SK-N-SH (cell line): ENCODE measurements at regions of chr12 and their contacts with region 1.

Region 1: DNA sequence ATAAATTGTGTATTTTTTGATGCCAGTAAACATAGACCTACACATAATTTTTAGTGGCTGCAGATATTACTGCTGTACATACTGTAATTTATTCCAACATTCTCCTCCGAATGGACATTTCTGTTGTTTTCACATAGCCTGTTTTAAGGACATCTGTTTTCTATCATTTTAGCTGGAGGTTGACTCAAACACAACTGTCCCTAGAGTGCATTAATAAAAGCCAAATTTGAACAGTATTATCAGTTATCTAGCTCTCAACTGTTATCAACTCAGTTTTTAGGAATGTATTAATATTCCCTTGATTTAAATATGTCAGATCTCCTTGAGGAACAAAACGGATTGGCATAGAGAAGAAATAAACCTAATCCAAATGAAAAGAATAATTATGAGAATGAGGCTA is 17.2 kb upstream of the PIWIL1 start:
- DNase-seq: no peak
- H3K4me3 ChIP-seq: no peak overlapping the region
- H3K27ac ChIP-seq: no peak overlapping the region
- H3K4me1 ChIP-seq: no peaks in the 10 kb centered on the region; a peak in 2 of 4 replicates
- H3K27me3 ChIP-seq: no peaks in the 10 kb centered on the region
- CTCF ChIP-seq: no peak
- EP300 ChIP-seq: peak in 1 of 2 experiments; percentile 65; a peak in 1 of 4 replicates
- RAD21 ChIP-seq: no peak

Region 2: DNA sequence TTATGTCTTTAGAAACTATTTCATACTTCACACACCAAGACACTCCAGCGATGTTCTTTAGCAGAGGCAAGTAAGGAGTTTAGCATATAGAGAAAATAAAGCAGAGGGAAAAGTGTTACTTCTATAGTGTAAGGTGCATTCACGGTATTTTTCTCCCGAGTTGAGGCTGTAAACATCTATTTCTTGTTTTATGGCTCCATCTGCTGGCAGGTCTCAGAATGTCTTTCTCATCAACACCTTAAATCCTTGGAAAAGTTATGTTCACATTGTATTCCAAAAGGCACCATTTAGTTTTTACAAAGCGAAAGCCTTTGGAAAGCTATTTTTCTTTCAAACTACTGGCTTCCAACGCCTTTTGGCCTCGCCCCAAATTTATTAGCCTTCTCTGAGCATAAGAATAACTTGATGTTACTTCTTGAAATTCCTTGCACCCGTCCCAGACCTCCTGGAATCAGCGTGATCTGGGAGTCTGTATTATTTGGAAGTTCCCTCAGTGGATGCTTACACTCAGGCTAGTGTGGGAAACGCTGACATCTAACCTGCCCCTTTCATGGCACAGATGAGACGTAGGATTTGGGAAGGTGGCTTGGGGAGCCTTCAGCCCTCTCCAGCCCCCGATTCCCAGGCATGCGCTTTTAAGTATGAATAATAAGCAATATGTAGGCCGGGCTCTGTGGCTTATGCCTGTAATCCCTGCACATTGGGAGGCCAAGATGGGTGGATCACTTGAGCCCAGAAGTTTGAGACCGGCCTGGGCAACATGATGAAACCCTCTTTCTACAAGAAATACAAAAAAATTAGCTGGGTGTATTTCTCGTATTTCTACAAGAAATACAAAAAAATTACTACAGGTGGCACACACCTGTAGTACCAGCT is 15.2 kb after region 1 on chr12:
- CTCF ChIA-PET with region 1: interaction called, 100 read pairs
- POLR2A ChIA-PET with region 1: no interaction called
- DNase-seq: peak; percentile 70
- H3K4me3 ChIP-seq: no peak overlapping the region
- H3K27ac ChIP-seq: no peak overlapping the region
- H3K4me1 ChIP-seq: peaks cover 0 to 2% of the 10 kb centered on the region in 2 experiments; a peak in 1 of 4 replicates
- H3K27me3 ChIP-seq: no peaks in the 10 kb centered on the region
- CTCF ChIP-seq: peak; percentile 64
- EP300 ChIP-seq: no peak
- RAD21 ChIP-seq: peak; percentile 95

Region 3: DNA sequence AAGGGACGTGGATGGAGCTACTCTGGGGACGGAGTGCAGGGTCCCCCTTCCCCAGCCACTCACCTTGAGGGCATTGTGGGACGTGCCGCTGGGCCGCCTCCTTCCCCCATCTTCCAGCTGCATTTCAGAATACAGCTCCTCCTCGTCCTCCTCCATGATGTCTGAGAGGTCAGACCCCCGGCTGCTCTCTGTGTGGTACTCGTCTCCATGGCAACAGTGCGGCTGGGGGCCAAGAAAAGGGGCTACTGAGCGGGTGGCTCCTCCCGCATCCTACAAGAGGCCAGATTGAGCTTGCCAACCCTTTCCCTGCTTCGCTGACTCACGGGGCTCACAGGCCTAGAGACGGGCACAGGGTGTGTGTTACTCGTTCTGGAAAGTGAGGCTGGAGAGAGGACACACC is 107.6 kb after region 1 on chr12:
- CTCF ChIA-PET with region 1: no interaction called
- POLR2A ChIA-PET with region 1: no interaction called
- DNase-seq: no peak
- H3K4me3 ChIP-seq: no peak overlapping the region
- H3K27ac ChIP-seq: no peak overlapping the region
- H3K4me1 ChIP-seq: no peaks in the 10 kb centered on the region; a peak in 1 of 4 replicates
- H3K27me3 ChIP-seq: no peaks in the 10 kb centered on the region
- CTCF ChIP-seq: no peak
- EP300 ChIP-seq: no peak
- RAD21 ChIP-seq: no peak

Region 4: GRCh38 chr12:130456375-130457119 is 136.0 kb after region 1 on chr12:
- CTCF ChIA-PET with region 1: no interaction called
- POLR2A ChIA-PET with region 1: no interaction called
- DNase-seq: no peak
- H3K4me3 ChIP-seq: no peak overlapping the region
- H3K27ac ChIP-seq: no peak overlapping the region; a peak in 1 of 4 replicates
- H3K4me1 ChIP-seq: peaks cover 0 to 15% of the 10 kb centered on the region in 2 experiments; a peak in 1 of 4 replicates
- H3K27me3 ChIP-seq: no peaks in the 10 kb centered on the region
- CTCF ChIP-seq: no peak
- EP300 ChIP-seq: no peak
- RAD21 ChIP-seq: no peak